AG04449 (cell line): ENCODE measurements at regions of chr7 and their contacts with region 1.

Region 1: GRCh38 chr7:121366852-121367431 is 29.2 kb downstream of the FAM3C start:
- DNase-seq: no peak
- H3K4me3 ChIP-seq: no peak overlapping the region
- CTCF ChIP-seq: peak; percentile 37

Region 2: GRCh38 chr7:121379930-121380329 is 13.0 kb after region 1 on chr7:
- CTCF ChIA-PET with region 1: interaction called, 31 read pairs
- POLR2A ChIA-PET with region 1: no interaction called
- DNase-seq: no peak
- H3K4me3 ChIP-seq: no peak overlapping the region
- CTCF ChIP-seq: no peak

Region 3: GRCh38 chr7:121395961-121396757 is 29.2 kb after region 1 on chr7 and contains the start of gene FAM3C:
- CTCF ChIA-PET with region 1: interaction called, 64 read pairs
- POLR2A ChIA-PET with region 1: interaction called, 3 read pairs
- DNase-seq: peak; percentile 33
- H3K4me3 ChIP-seq: peak within 1 kb of the TSS; percentile 73
- CTCF ChIP-seq: peak; percentile 82

Region 4: GRCh38 chr7:121428855-121429489 is 62.0 kb after region 1 on chr7:
- CTCF ChIA-PET with region 1: no interaction called
- POLR2A ChIA-PET with region 1: no interaction called
- DNase-seq: peak; percentile 19
- H3K4me3 ChIP-seq: no peak overlapping the region
- CTCF ChIP-seq: no peak

Region 5: GRCh38 chr7:121558288-121558687 is 191.3 kb after region 1 on chr7:
- CTCF ChIA-PET with region 1: interaction called, 28 read pairs
- POLR2A ChIA-PET with region 1: no interaction called
- DNase-seq: no peak
- H3K4me3 ChIP-seq: no peak overlapping the region
- CTCF ChIP-seq: no peak